Left colon (tissue), 2 donors: ENCODE measurements at regions of chr17 and their contacts with region 1.

Region 1: GRCh38 chr17:6677158-6677831 is 25.7 kb downstream of the C17orf100 start:
- DNase-seq: no peak
- ATAC-seq: no peak

Region 2: DNA sequence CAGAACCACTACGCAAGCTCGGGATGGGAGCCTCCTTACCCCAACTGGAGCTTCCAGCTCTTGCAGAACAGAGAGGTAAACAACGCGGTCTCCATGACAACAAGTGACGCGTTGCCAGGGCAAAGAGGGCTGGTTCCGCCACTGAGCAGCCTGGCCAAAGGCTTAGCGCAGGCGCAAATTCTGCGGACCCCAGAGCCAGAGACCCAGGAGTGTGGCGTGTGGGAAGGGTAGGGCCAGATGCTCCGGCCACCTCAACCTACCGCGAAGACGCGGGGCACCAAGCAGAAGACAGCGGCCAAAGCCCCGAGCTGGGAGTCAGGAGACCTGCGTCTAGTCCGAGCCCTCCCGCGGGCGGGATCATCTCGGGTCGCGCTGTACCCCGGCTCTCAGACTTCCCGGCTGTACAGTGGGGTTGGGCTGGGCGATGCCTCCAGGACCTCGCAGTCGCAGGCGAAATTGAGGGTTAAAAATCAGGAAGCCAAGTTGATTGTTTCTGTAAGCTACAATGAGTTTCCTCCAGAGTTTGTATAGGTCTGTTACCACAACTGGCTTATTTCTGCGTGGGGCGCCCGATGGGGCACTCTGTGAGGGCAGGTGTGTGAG is 154.5 kb after region 1 on chr17 and contains the start of gene TEKT1:
- intact Hi-C with region 1: loop called in 1 of 2 experiments (anchors 10 kb)
- DNase-seq: peak; percentile 60 to 68
- ATAC-seq: peak; percentile 59
- total RNA-seq, gene TEKT1: not detected